ENCODE measurements at regions of chr18 and their contacts with region 1.

Region 1: DNA sequence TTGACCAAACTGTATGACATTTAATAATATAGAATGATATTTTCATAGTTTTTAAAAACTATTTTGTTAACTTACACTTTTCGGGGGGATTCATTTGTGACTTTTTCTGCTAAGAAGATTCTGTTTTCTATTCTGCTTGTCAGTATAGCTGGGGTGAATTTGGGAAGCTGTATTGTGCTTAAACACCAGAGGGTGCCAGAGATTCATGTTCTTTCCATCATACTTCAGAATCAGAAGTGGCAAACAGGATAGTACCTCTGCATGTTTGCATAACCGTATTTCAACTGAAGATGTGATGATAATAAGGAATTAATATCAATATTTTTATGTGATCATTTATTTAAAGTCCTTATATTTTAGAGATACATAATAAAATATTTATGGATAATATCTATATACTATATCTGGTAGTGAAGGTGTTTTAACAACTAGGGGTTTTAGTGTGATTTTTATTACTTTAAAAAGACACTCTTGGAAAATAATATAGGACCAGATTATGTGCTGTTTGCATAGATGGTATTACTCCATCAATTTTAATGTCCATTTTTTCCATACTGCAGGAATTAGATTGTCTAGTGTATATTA is 81.0 kb downstream of the TAF4B start:
- DNase-seq: peak; percentile 24
- ATAC-seq: peak; percentile 92
- H3K4me3 ChIP-seq: no peak overlapping the region
- H3K27ac ChIP-seq: no peak overlapping the region
- H3K4me1 ChIP-seq: no peaks in the 10 kb centered on the region
- H3K27me3 ChIP-seq: no peaks in the 10 kb centered on the region
- CTCF ChIP-seq: peak; percentile 65 to 72 (median 69)
- EP300 ChIP-seq: no peak
- POLR2A ChIP-seq: no peak
- RAD21 ChIP-seq: peak; percentile 90

Region 2: DNA sequence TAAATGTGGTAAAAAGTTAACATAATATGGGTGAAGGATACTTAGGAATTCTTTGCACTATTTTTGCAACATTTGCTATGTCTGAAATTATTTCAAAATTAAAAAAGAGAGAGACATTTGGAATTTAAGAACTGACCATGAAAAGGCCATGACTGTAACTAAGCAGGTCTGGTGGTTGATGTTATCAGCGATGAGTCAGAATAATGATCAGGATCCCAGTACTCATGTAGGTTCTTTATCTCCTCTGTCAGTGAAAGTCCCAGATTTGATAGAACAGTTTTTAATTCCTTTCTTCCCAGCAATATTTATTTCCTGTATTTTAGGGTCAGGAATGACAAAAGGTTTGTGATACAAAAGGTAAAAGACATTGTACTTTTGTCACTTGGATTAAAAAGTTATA is 712.9 kb before region 1 on chr18:
- CTCF ChIA-PET with region 1: no interaction called
- POLR2A ChIA-PET with region 1: no interaction called
- RAD21 ChIA-PET with region 1: no interaction called
- SMC1A ChIA-PET with region 1: no interaction called
- in situ Hi-C with region 1: no loop called
- intact Hi-C with region 1: no loop called
- DNase-seq: no peak
- ATAC-seq: no peak
- H3K4me3 ChIP-seq: no peak overlapping the region
- H3K27ac ChIP-seq: no peak overlapping the region
- H3K4me1 ChIP-seq: no peaks in the 10 kb centered on the region
- H3K27me3 ChIP-seq: no peaks in the 10 kb centered on the region
- CTCF ChIP-seq: no peak
- EP300 ChIP-seq: no peak
- POLR2A ChIP-seq: no peak
- RAD21 ChIP-seq: no peak

Region 3: GRCh38 chr18:26225022-26225693 is 82.1 kb before region 1 on chr18:
- CTCF ChIA-PET with region 1: no interaction called
- POLR2A ChIA-PET with region 1: no interaction called
- RAD21 ChIA-PET with region 1: no interaction called
- SMC1A ChIA-PET with region 1: no interaction called
- in situ Hi-C with region 1: no loop called
- intact Hi-C with region 1: no loop called
- DNase-seq: no peak
- ATAC-seq: no peak
- H3K4me3 ChIP-seq: 0 out of 2 replicates have a peak overlapping the region, but pooled peaks have one; percentile 72
- H3K27ac ChIP-seq: no peak overlapping the region
- H3K4me1 ChIP-seq: no peaks in the 10 kb centered on the region
- H3K27me3 ChIP-seq: no peaks in the 10 kb centered on the region
- CTCF ChIP-seq: no peak
- EP300 ChIP-seq: no peak
- POLR2A ChIP-seq: no peak
- RAD21 ChIP-seq: no peak

Region 4: DNA sequence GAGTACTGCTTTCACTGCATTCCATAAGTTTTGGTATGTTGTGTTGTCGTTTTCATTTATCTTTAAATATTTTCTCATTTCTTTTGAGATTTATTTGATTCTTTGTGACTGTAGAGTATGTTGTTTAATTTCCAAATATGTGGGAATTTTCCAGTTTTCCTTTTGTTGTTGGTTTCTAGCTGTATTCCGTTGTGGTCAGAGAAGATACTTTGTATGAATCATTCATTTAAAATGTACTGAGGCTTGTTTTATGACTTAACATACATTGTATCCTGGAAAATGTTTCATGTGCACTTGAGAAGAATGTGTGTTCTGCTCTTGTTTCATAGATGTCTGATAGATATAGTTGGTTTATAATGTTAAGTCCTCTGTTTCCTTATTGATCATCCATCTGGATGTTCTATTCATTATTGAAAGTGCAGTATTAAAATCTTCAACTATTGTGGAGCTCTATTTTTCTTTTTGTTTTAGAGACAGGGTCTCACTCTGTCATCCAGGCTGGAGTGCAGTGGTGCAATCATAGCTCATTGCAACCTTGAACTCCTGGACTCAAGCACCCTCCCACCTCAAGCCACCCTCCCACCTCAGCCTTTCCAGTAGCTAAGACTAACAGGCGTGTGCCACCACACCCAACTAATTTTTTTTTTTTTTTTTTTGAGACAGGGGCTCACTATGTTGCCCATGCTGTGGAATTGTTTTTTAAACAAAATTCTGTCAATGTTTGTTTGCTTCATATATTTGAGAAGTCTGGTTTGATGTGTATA is 15.8 kb after region 1 on chr18:
- CTCF ChIA-PET with region 1: interaction called, 20 read pairs
- POLR2A ChIA-PET with region 1: no interaction called
- RAD21 ChIA-PET with region 1: interaction called, 4 read pairs
- SMC1A ChIA-PET with region 1: interaction called, 6 read pairs
- in situ Hi-C with region 1: no loop called
- intact Hi-C with region 1: no loop called
- DNase-seq: no peak
- ATAC-seq: no peak
- H3K4me3 ChIP-seq: no peak overlapping the region
- H3K27ac ChIP-seq: no peak overlapping the region
- H3K4me1 ChIP-seq: no peaks in the 10 kb centered on the region
- H3K27me3 ChIP-seq: no peaks in the 10 kb centered on the region
- CTCF ChIP-seq: no peak
- EP300 ChIP-seq: no peak
- POLR2A ChIP-seq: no peak
- RAD21 ChIP-seq: no peak

Region 5: GRCh38 chr18:26493021-26493420 is 185.7 kb after region 1 on chr18:
- CTCF ChIA-PET with region 1: no interaction called
- POLR2A ChIA-PET with region 1: no interaction called
- RAD21 ChIA-PET with region 1: no interaction called
- SMC1A ChIA-PET with region 1: no interaction called
- in situ Hi-C with region 1: no loop called
- intact Hi-C with region 1: no loop called
- DNase-seq: no peak
- ATAC-seq: peak; percentile 61; the same call in 2 of the 3 replicates
- H3K4me3 ChIP-seq: no peak overlapping the region
- H3K27ac ChIP-seq: no peak overlapping the region
- H3K4me1 ChIP-seq: no peaks in the 10 kb centered on the region
- H3K27me3 ChIP-seq: no peaks in the 10 kb centered on the region
- CTCF ChIP-seq: no peak
- EP300 ChIP-seq: no peak
- POLR2A ChIP-seq: no peak
- RAD21 ChIP-seq: no peak

Region 6: DNA sequence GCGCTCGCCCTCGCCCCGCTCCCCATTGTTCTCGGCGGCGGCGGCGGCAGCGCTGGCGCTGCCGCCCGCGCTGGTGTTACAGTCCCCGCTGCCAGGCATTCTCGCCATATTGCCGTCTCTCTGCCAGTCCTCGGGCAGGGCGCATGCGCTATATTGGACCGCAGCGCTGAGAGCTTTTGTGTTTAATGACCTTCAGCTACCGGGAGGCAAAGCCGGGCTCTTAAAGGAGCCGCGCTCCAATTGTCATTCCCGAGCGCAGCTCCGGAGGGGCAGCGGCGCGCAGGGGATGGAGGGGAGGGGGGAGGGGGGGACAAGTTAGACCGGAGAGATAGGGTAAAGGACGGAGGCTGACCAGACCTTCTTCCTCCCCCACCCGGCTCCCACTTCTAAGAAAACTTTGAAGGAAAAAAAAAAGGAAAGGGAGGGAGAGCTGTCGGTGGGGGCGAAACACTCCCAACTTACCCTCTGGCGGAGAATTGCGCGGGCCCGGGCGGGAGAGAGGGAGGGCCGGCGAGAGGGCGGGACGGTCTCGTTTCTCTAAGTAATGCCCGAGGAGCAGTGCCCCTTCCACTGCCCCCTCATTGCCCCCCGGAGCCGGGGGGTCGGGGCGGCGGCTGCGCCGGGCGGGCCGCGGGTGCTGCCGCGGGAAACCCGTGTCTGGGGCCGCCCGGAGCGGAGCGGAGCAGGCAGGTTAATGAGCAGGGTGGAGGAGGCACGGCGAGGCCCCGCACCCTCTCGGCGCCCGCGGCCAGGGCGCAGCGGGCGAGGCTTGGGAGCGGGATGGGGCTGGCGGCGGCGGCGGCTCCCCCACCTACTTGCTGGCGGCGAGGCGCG is 241.4 kb after region 1 on chr18 and contains the start of gene KCTD1:
- CTCF ChIA-PET with region 1: no interaction called
- POLR2A ChIA-PET with region 1: no interaction called
- RAD21 ChIA-PET with region 1: no interaction called
- SMC1A ChIA-PET with region 1: interaction called, 4 read pairs
- in situ Hi-C with region 1: no loop called
- intact Hi-C with region 1: loop called (anchors 10 kb)
- DNase-seq: no peak
- ATAC-seq: peak; percentile 70
- H3K4me3 ChIP-seq: peak within 1 kb of the TSS; percentile 70
- H3K27ac ChIP-seq: peak within 1 kb of the TSS; percentile 67
- H3K4me1 ChIP-seq: peaks cover 31% of the 10 kb centered on the region
- H3K27me3 ChIP-seq: peaks cover 4 to 8% of the 10 kb centered on the region in 2 experiments
- CTCF ChIP-seq: no peak
- EP300 ChIP-seq: no peak
- POLR2A ChIP-seq: peak; percentile 46; the same call in 1 of the 2 replicates
- RAD21 ChIP-seq: no peak
- polyA plus RNA-seq, gene KCTD1: 1.5 to 1.8 TPM

Region 7: DNA sequence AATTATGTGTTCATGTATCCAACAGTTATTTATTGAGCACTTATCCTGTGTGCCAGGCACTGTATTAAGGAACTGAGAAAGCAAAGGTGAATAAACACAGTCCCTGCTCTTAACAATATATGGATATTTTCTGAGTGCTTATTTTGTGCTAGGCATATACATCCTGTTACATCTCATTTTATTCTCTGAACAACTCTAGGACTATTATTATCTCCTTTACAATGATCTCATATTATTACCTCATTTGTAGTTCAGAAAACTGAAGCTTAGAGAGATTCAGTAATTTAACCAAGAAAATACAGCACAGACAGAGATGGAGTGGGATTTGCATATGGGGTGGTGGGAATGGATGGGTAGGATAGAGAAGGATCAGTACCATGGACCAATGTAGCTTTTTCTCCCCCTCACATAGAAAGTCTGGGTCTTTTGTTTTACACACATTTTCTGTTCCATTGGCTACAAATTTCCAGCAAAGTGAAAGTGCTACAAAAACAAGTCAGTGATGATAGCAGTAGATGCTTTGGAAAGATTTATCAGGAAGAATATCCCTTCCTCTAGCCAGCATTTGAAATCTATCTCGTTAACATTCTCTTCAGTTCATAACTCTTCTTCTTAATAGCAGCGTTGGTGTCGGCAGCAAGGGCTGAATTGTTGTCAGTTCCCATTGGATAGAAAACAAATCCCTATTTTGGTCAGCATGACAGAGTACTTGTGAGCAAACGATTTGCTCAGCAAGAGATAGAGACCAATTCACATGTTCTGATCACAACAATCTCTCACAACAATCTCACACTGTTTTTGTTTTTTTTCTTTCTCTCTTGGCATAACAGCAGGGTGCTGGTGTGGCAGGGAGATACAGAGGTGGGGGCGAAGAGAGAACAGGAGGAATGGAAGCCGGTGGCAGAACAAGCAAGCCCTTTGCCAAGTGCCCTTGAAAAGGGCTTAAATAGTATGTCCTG is 343.3 kb after region 1 on chr18:
- CTCF ChIA-PET with region 1: interaction called, 9 read pairs
- POLR2A ChIA-PET with region 1: no interaction called
- RAD21 ChIA-PET with region 1: no interaction called
- SMC1A ChIA-PET with region 1: interaction called, 7 read pairs
- in situ Hi-C with region 1: loop called (anchors 5 kb)
- intact Hi-C with region 1: loop called (anchors 1 kb)
- DNase-seq: no peak
- ATAC-seq: no peak
- H3K4me3 ChIP-seq: no peak overlapping the region
- H3K27ac ChIP-seq: no peak overlapping the region
- H3K4me1 ChIP-seq: peaks cover 8% of the 10 kb centered on the region
- H3K27me3 ChIP-seq: peaks cover 5 to 22% of the 10 kb centered on the region in 2 experiments
- CTCF ChIP-seq: no peak
- EP300 ChIP-seq: no peak
- POLR2A ChIP-seq: no peak
- RAD21 ChIP-seq: no peak

Region 8: DNA sequence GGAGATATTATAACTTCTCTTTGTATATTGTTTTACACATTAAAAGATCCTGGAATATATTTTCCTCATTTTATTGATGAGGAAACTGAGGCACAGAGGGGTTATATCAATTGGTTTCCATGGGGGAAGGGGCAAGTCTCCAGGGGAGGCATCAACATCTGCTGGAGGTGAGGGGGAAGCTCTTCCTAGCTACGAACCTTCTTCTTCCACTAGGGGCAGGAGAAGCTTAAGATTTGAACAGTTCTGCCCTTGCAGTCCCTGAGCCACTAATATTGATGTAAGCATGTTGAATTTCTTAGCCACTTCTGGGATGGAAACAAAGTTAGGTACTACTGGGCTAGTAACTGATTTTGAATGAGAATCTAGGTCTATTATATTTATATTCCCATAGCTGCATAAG is 698.3 kb after region 1 on chr18:
- CTCF ChIA-PET with region 1: no interaction called
- POLR2A ChIA-PET with region 1: no interaction called
- RAD21 ChIA-PET with region 1: no interaction called
- SMC1A ChIA-PET with region 1: no interaction called
- in situ Hi-C with region 1: no loop called
- intact Hi-C with region 1: loop called (anchors 10 kb)
- DNase-seq: no peak
- ATAC-seq: peak; percentile 88
- H3K4me3 ChIP-seq: no peak overlapping the region
- H3K27ac ChIP-seq: no peak overlapping the region
- H3K4me1 ChIP-seq: no peaks in the 10 kb centered on the region
- H3K27me3 ChIP-seq: 0 out of 4 replicates have a peak, but pooled peaks cover 0 to 2% of the 10 kb centered on the region in 2 experiments
- CTCF ChIP-seq: peak; percentile 38 to 58 (median 54); a peak in 5 of 6 replicates
- EP300 ChIP-seq: no peak
- POLR2A ChIP-seq: no peak
- RAD21 ChIP-seq: peak; percentile 59